Activated CD8-positive, alpha-beta memory T cell treated with anti-CD3 and anti-CD28 coated beads, Interleukin-2, amount 10 ng/mL, durations not matched to agents 7 days and 5 days (primary cell): ENCODE measurements at regions of chr10 and their contacts with region 1.

Region 1: DNA sequence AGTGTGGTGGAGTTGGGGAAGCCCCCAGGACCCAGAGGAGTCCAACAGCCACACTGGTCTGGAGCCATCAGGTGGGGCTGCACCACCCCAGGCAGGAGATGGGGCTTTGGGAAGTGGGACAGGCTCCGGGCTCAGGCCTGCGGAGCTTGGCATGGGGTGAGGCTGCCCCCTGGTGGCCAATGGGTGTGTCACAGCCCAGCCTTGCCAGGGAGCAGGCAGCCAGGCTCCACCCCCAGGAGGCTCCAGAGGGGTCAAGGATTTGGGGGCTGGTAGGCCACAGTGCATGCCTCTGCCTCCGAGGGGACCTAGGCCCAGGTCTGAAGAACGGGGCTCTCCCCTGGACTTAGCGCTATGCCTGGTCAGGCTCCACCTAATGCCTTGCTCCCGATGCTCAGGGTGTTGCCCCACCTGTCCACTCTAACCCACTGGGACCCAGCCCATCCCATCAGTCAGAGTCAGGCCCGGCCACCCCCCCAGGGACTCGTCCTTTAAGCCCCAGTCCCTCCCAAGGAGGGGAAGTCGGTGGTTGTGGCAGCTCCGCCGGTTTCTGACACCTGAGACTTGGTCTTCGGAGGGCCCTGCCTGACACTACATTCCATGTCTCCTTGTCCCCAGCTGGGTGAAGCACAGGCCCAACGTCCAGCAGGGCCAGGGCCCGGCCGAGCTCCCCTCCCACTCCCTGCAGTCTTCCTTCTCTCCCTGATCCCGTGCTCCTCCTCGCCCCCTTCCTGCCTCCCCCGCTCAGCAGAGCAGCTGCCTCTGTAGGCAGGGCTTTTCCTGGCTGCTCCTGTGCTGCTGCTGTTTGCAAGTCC is 11.3 kb upstream of the SAMD8 start:
- DNase-seq: peak; percentile 86
- ATAC-seq: peak; percentile 97
- H3K4me3 Mint-ChIP-seq: no peak overlapping the region
- H3K27ac Mint-ChIP-seq: no peak overlapping the region
- H3K4me1 Mint-ChIP-seq: peaks cover 2% of the 10 kb centered on the region
- H3K27me3 Mint-ChIP-seq: no peaks in the 10 kb centered on the region

Region 2: DNA sequence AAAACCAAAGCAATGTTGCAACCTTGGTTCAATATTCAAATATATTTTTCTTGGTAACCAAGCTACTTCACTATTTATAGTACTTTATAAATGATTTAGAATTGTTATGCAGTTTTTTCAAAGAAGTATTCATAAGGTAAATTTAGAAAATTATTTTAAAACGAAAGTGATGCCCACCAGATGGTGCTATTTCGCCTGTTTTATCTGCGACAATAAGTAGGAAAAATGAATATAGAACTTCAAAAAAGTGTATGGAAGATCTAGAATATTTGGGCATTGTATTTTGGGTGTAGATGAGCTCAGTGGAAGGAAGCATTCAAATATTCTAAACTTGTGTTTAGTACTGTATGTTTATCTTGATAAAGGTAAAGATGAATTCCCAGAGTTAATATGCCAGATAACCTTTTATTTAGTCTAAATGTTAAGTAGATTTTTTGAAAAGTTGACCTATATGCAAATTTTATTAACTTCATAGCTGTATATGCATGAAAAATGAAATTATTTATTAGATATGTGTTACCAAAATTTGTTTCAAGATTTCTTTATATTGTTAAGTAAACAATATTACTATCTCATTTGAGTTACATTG is 856.0 kb before region 1 on chr10:
- CTCF ChIA-PET with region 1: interaction called, 13 read pairs
- DNase-seq: no peak
- ATAC-seq: no peak
- H3K4me3 Mint-ChIP-seq: no peak overlapping the region
- H3K27ac Mint-ChIP-seq: no peak overlapping the region
- H3K4me1 Mint-ChIP-seq: no peaks in the 10 kb centered on the region
- H3K27me3 Mint-ChIP-seq: no peaks in the 10 kb centered on the region

Region 3: GRCh38 chr10:75111367-75111906 is 11.3 kb after region 1 on chr10 and contains the start of gene SAMD8:
- CTCF ChIA-PET with region 1: interaction called, 12 read pairs
- DNase-seq: peak; percentile 98
- ATAC-seq: peak; percentile 89
- H3K4me3 Mint-ChIP-seq: peak within 1 kb of the TSS; percentile 84
- H3K27ac Mint-ChIP-seq: peak within 1 kb of the TSS; percentile 87
- H3K4me1 Mint-ChIP-seq: peaks cover 48% of the 10 kb centered on the region
- H3K27me3 Mint-ChIP-seq: no peaks in the 10 kb centered on the region
- total RNA-seq, gene SAMD8: 13.8 TPM

Region 4: GRCh38 chr10:75312440-75312839 is 212.3 kb after region 1 on chr10:
- CTCF ChIA-PET with region 1: no interaction called
- DNase-seq: no peak
- ATAC-seq: no peak
- H3K4me3 Mint-ChIP-seq: no peak overlapping the region
- H3K27ac Mint-ChIP-seq: no peak overlapping the region
- H3K4me1 Mint-ChIP-seq: no peaks in the 10 kb centered on the region
- H3K27me3 Mint-ChIP-seq: no peaks in the 10 kb centered on the region